ENCODE measurements at regions of chr12 and their contacts with region 1.

Region 1: DNA sequence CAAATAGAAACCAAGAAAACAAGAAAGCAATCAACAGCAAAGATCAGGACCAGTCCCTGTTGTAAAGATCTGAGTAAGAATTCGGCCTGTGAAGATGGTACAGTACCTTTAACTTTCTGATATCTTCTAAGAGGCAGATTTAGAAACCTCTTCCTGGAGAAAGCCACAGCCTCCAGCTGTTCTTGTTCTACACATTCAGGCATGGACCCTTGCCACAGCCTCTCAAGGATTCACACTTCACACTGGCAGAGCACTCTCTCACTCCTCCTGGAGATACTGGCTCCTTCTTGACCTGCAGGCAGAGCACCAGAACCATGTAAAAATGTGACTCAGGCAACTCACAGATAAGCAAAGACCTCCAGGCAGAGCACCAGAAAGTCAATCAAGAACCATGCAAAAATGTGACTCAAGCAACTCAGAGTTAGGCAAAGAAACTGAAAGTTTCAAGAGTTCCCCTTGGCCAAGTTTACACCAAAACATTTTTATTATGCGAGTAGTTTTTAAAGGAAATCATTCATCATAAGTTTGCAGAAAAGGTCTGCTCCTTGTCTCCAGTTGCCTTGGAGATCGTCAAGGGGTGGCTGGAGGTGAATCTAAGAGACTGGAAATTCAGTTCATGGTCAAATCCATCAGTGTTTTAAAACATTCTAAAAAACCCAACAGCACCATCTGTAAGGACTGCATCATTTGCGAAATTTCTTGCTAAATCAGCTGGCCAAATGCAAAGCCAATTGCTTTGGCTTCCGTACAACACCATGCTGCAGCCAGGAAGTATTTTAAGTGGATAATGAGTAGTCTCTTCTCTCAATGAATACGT is 119.3 kb upstream of the MDM1 start:
- DNase-seq: peak; percentile 71
- H3K4me3 Mint-ChIP-seq: peak overlapping the region; percentile 45
- H3K27ac Mint-ChIP-seq: peak overlapping the region; percentile 96
- H3K4me1 Mint-ChIP-seq: peaks cover 91% of the 10 kb centered on the region
- H3K27me3 Mint-ChIP-seq: no peaks in the 10 kb centered on the region

Region 2: DNA sequence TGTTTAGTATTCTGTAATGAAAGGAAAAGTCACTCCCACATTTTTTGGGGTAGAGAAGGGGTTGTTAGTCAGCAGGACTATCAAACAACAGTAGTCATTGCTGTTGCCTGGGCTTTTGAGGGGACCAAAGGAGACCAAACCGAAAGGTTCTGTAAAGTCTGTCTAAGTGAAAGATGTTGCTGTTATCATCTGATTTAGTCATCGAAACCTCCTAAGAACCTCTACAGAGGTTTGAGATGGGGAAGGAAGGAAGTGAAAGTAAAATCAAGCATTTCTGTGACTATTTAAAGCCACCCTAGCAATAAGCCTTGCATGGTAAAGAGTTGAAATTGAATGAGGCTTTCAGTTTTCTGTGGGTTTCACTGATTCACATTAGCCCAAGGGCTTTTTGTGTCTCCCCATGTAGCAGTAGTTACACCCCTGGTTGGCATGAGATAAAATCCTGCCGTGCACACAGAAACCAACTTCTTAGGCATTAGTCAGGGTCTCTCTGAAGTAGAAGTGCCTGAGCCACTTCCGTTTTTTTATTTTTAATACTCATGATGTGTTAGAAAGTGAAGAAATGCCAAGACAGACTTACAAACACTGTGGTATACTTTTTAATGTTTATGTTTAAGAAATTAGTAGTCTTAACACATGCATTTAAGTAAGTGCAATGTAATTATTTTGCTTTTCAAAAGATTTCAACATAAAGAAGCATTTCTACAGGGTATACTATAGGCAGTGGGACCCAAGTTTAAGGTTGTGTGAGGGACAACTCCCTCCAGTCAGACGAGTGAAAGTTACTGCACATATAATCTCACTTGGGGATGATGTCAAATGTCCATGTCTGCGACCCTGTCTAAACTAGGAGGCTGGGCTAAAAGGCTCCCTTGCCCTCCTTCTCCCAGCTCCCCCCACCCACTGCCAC is 752.5 kb before region 1 on chr12:
- CTCF ChIA-PET with region 1: no interaction called
- intact Hi-C with region 1: loop called (anchors 5 kb)
- DNase-seq: peak; percentile 74
- H3K4me3 Mint-ChIP-seq: peak overlapping the region; percentile 28
- H3K27ac Mint-ChIP-seq: peak overlapping the region; percentile 64
- H3K4me1 Mint-ChIP-seq: peaks cover 51% of the 10 kb centered on the region
- H3K27me3 Mint-ChIP-seq: no peaks in the 10 kb centered on the region

Region 3: DNA sequence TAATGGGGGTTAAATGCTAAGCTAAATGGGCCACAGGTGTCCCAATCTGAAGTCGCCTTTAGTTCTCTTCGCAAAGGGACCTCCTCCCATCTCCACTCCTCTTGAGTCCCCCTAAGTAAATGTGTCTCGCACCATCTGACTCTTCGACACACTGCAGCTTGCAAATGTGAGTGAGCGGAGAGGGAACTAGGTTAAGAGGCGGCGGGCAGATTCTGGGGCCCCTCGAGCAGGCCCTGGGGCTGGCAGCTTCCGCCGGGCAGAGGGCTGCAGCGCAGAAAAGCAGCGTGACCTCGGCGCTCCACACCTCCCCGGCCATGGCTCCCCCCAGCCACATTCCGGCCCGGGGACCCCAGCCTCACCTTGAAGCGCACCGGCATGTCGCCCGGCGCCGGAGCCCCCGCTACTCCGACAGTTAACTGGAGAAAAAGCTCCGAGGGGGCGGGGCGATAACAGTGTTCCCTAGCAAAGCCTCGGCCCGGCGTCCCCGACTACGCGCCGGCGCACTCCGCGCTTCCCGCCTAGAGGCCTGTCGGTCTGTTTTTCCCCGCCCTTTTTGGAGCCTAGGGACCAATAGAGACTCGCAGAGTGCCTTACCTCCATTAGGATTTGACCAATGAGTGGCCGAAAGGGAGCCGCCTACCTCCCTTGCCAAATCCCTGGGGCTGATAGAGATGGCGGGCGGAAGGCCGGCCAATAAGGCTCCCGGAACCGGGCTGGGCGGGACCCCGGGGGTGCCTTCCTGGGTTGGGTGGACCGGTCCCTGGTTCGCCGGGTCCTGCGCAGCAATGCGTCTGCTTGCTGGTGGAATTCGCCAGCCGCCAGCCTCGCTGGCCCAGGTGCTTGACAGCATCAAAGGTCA is 119.4 kb before region 1 on chr12 and contains the start of gene MDM1:
- CTCF ChIA-PET with region 1: no interaction called
- intact Hi-C with region 1: loop called (anchors 1 kb)
- DNase-seq: peak; percentile 96
- H3K4me3 Mint-ChIP-seq: peak within 1 kb of the TSS; percentile 84
- H3K27ac Mint-ChIP-seq: peak within 1 kb of the TSS; percentile 73
- H3K4me1 Mint-ChIP-seq: peaks cover 47% of the 10 kb centered on the region
- H3K27me3 Mint-ChIP-seq: no peaks in the 10 kb centered on the region
- total RNA-seq, gene MDM1: 16.5 to 20.8 TPM

Region 4: GRCh38 chr12:68497702-68498101 is 46.2 kb after region 1 on chr12:
- CTCF ChIA-PET with region 1: interaction called, 3 read pairs
- intact Hi-C with region 1: loop called (anchors 1 kb)
- DNase-seq: peak; percentile 17
- H3K4me3 Mint-ChIP-seq: peak overlapping the region; percentile 35
- H3K27ac Mint-ChIP-seq: peak overlapping the region; percentile 80
- H3K4me1 Mint-ChIP-seq: peaks cover 28% of the 10 kb centered on the region
- H3K27me3 Mint-ChIP-seq: no peaks in the 10 kb centered on the region

Region 5: GRCh38 chr12:68510397-68510796 is 58.9 kb after region 1 on chr12:
- CTCF ChIA-PET with region 1: no interaction called
- intact Hi-C with region 1: no loop called
- DNase-seq: no peak
- H3K4me3 Mint-ChIP-seq: no peak overlapping the region
- H3K27ac Mint-ChIP-seq: no peak overlapping the region
- H3K4me1 Mint-ChIP-seq: peaks cover 8% of the 10 kb centered on the region
- H3K27me3 Mint-ChIP-seq: no peaks in the 10 kb centered on the region

Region 6: GRCh38 chr12:68675101-68675842 is 223.8 kb after region 1 on chr12:
- CTCF ChIA-PET with region 1: no interaction called
- intact Hi-C with region 1: loop called (anchors 1 kb)
- DNase-seq: peak; percentile 85
- H3K4me3 Mint-ChIP-seq: peak overlapping the region; percentile 29
- H3K27ac Mint-ChIP-seq: peak overlapping the region; percentile 85
- H3K4me1 Mint-ChIP-seq: peaks cover 52% of the 10 kb centered on the region
- H3K27me3 Mint-ChIP-seq: no peaks in the 10 kb centered on the region

Region 7: DNA sequence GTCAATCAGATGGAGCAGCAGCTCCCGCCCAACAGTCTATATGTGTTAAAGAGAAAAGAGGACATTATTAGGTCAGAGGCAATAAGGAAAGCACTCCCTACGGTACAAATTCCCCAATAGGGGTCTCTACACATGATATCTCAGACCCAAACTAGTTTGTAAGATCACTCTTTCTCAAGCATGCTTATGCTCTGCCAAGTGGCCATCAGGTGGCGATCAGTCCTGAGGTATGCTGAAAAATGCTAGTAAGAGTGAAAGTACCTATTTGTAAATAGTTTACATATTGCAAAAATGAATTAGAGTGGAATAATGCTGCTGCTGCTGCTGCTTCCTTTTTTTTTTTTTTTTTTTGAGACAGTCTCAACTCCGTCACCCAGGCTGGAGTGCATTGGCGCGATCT is 420.5 kb after region 1 on chr12:
- CTCF ChIA-PET with region 1: no interaction called
- intact Hi-C with region 1: no loop called
- DNase-seq: peak; percentile 54
- H3K4me3 Mint-ChIP-seq: no peak overlapping the region
- H3K27ac Mint-ChIP-seq: no peak overlapping the region
- H3K4me1 Mint-ChIP-seq: no peaks in the 10 kb centered on the region
- H3K27me3 Mint-ChIP-seq: no peaks in the 10 kb centered on the region

Region 8: GRCh38 chr12:69059483-69060457 is 608.3 kb after region 1 on chr12:
- CTCF ChIA-PET with region 1: no interaction called
- intact Hi-C with region 1: loop called (anchors 1 kb)
- DNase-seq: peak; percentile 37
- H3K4me3 Mint-ChIP-seq: no peak overlapping the region
- H3K27ac Mint-ChIP-seq: peak overlapping the region; percentile 81
- H3K4me1 Mint-ChIP-seq: peaks cover 49% of the 10 kb centered on the region
- H3K27me3 Mint-ChIP-seq: no peaks in the 10 kb centered on the region